Activated CD4-positive, alpha-beta memory T cell treated with anti-CD3 and anti-CD28 coated beads for 36 hours (primary cell): ENCODE measurements at regions of chr6 and their contacts with region 1.

Region 1: DNA sequence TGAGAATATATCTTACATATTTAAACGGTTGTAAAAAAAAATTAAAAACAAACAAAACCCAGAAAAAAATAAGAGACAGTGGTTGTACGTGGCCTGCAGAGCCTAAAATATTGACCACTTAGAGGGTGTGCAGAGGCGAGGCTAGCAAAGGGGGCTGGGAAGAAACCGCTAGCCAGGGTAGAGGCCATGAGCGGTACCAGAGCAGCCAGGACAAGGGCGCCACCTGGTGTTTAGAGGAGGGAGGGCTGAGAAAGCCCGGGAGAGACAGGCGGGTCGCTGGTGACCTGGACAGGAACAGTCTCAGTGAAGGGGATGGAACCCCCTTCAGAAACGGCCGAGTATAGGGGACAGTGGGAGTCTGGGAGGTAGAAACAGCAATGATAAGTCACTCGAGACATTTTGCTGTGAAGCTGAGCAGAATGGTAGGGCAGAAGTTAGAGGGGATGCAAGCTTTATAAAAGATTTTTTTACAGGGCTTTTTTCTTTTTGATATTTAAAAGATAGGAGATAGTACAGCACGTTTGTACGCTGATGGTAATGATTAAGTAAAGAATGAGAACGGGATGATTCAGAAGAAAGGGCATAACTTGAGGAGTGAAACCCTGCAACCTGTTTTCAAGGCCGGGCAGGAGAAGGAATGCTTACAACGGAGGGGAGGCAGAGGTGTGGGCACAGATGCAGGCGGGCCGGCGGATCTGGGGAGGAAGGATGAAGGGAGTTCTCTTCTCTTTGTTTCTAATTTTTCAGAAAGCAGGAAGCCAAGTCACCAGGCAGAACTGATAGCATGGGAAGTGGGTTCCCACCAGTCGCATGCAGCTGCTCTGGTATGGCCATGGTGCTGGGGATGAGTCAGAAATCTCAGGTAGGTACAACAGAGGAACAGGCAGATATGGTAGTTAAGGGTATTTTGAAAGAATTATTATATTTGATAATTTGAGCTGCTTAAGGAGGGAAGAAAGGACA is 76.2 kb downstream of the FAM229B start:
- DNase-seq: peak; percentile 88
- H3K4me3 Mint-ChIP-seq: peak overlapping the region; percentile 36
- H3K27ac Mint-ChIP-seq: no peak overlapping the region
- H3K4me1 Mint-ChIP-seq: peaks cover 16% of the 10 kb centered on the region
- H3K27me3 Mint-ChIP-seq: peaks cover 43% of the 10 kb centered on the region

Region 2: GRCh38 chr6:111721753-111722154 is 441.8 kb before region 1 on chr6:
- CTCF ChIA-PET with region 1: no interaction called
- POLR2A ChIA-PET with region 1: no interaction called
- intact Hi-C with region 1: loop called (anchors 10 kb)
- DNase-seq: peak; percentile 63
- H3K4me3 Mint-ChIP-seq: no peak overlapping the region
- H3K27ac Mint-ChIP-seq: peak overlapping the region; percentile 65
- H3K4me1 Mint-ChIP-seq: peaks cover 91% of the 10 kb centered on the region
- H3K27me3 Mint-ChIP-seq: no peaks in the 10 kb centered on the region

Region 3: GRCh38 chr6:112010328-112010727 is 153.2 kb before region 1 on chr6:
- CTCF ChIA-PET with region 1: interaction called, 14 read pairs
- POLR2A ChIA-PET with region 1: no interaction called
- intact Hi-C with region 1: loop called (anchors 1 kb)
- DNase-seq: peak; percentile 49
- H3K4me3 Mint-ChIP-seq: no peak overlapping the region
- H3K27ac Mint-ChIP-seq: no peak overlapping the region
- H3K4me1 Mint-ChIP-seq: peaks cover 32% of the 10 kb centered on the region
- H3K27me3 Mint-ChIP-seq: no peaks in the 10 kb centered on the region

Region 4: DNA sequence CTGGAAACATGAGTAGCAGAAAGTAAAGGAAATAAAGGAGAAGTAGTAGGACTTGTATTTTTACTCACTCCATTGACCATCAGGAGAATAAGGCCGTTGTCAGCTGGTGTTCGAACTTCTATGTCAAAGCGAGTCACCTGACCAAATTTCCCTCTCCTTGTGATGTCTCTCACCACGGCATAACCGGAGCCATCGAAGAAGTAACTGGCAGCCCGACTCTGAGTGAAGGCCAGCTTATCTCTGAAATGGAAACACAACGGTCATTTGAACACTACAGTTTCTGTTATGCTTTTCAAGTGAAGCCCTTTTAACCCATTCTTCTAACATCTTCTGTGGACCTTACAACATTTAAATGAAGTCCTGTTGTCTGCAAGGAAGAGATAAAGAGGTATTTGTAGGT is 24.5 kb before region 1 on chr6:
- CTCF ChIA-PET with region 1: interaction called, 18 read pairs
- POLR2A ChIA-PET with region 1: no interaction called
- intact Hi-C with region 1: no loop called
- DNase-seq: no peak
- H3K4me3 Mint-ChIP-seq: no peak overlapping the region
- H3K27ac Mint-ChIP-seq: no peak overlapping the region
- H3K4me1 Mint-ChIP-seq: peaks cover 6% of the 10 kb centered on the region
- H3K27me3 Mint-ChIP-seq: peaks cover 8% of the 10 kb centered on the region

Region 5: GRCh38 chr6:112144145-112144926 is 19.2 kb before region 1 on chr6:
- CTCF ChIA-PET with region 1: interaction called, 18 read pairs
- POLR2A ChIA-PET with region 1: no interaction called
- intact Hi-C with region 1: no loop called
- DNase-seq: no peak
- H3K4me3 Mint-ChIP-seq: no peak overlapping the region
- H3K27ac Mint-ChIP-seq: no peak overlapping the region
- H3K4me1 Mint-ChIP-seq: peaks cover 6% of the 10 kb centered on the region
- H3K27me3 Mint-ChIP-seq: peaks cover 4% of the 10 kb centered on the region

Region 6: DNA sequence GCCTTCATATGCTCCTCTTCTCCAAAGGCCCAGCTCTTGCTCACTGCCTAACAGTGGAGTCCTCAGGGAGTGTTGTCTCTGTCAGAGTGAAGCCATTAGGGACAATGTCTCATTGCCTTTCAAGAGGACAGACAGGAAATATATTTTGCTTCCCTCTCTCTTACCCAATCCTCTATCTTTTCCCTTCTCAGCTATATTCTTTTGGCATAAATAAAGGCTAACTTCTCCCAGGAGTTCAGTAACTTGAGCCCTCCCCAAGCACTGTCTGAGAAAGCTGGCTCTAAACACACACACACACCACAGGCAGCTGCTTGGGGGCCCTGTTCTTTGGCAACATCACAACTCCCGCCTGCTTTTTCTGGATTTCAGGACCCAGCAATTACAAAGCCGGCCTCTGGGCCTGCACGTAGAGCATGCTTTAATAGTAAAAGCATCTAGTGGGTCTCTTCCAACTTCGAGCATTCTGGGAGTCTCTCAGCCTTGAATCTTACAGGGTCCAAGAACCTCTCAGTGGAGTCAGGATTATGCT is 125.5 kb after region 1 on chr6:
- CTCF ChIA-PET with region 1: no interaction called
- POLR2A ChIA-PET with region 1: no interaction called
- intact Hi-C with region 1: no loop called
- DNase-seq: no peak
- H3K4me3 Mint-ChIP-seq: no peak overlapping the region
- H3K27ac Mint-ChIP-seq: no peak overlapping the region
- H3K4me1 Mint-ChIP-seq: peaks cover 20% of the 10 kb centered on the region
- H3K27me3 Mint-ChIP-seq: peaks cover 26% of the 10 kb centered on the region

Region 7: DNA sequence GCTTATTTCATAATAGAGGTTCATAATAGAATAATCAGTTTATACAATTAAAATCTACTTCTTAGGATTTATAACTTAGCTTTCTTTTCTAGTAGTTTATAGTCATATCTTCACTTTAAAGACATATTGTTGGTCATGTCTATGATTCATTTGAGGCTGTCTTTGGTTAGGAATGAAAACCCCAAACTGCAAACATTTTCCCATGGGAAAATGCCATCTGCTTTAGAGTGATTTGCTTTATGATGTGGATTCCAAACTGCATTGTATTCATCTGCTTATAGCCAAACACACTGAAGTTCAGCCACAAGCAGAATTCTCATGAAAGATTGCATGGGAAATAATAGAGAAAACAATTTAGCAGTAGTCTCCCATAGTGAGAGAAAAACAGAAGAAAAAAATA is 311.5 kb after region 1 on chr6:
- CTCF ChIA-PET with region 1: no interaction called
- POLR2A ChIA-PET with region 1: no interaction called
- intact Hi-C with region 1: no loop called
- DNase-seq: no peak
- H3K4me3 Mint-ChIP-seq: no peak overlapping the region
- H3K27ac Mint-ChIP-seq: no peak overlapping the region
- H3K4me1 Mint-ChIP-seq: no peaks in the 10 kb centered on the region
- H3K27me3 Mint-ChIP-seq: no peaks in the 10 kb centered on the region

Region 8: DNA sequence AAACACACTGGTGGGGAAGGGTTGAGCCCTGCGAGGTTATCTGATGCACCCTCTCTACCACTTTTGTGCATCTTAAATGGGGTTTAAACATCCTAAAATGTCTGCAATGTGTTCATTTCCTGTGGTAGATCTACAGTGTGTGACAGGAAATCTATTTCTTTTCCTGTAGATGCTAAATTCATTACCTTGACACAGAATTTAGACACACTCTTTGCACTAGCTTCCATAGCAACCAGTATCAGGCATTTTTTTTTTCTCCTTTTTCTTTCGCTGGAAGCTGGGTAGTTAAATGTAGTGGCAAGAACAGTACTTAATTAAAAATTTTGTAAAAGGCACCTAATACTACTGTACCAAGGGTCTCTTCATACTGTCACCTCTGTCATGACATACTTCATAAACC is 324.7 kb after region 1 on chr6:
- CTCF ChIA-PET with region 1: no interaction called
- POLR2A ChIA-PET with region 1: no interaction called
- intact Hi-C with region 1: no loop called
- DNase-seq: no peak
- H3K4me3 Mint-ChIP-seq: no peak overlapping the region
- H3K27ac Mint-ChIP-seq: no peak overlapping the region
- H3K4me1 Mint-ChIP-seq: no peaks in the 10 kb centered on the region
- H3K27me3 Mint-ChIP-seq: peaks cover 5% of the 10 kb centered on the region

Region 9: GRCh38 chr6:113512576-113512975 is 1349.0 kb after region 1 on chr6:
- CTCF ChIA-PET with region 1: no interaction called
- POLR2A ChIA-PET with region 1: no interaction called
- intact Hi-C with region 1: no loop called
- DNase-seq: no peak
- H3K4me3 Mint-ChIP-seq: no peak overlapping the region
- H3K27ac Mint-ChIP-seq: no peak overlapping the region
- H3K4me1 Mint-ChIP-seq: no peaks in the 10 kb centered on the region
- H3K27me3 Mint-ChIP-seq: no peaks in the 10 kb centered on the region